PC-9 (cell line): ENCODE measurements at regions of chr4 and their contacts with region 1.

Region 1: GRCh38 chr4:99655308-99656081 is 2.1 kb downstream of the C4orf54 start:
- DNase-seq: peak; percentile 64 to 77
- H3K4me3 ChIP-seq: no peak overlapping the region
- H3K27ac ChIP-seq: peak overlapping the region; percentile 38
- H3K4me1 ChIP-seq: peaks cover 42% of the 10 kb centered on the region
- H3K27me3 ChIP-seq: no peaks in the 10 kb centered on the region
- CTCF ChIP-seq: no peak

Region 2: GRCh38 chr4:99816545-99817308 is 161.2 kb after region 1 on chr4 and contains the start of gene DAPP1:
- CTCF ChIA-PET with region 1: no interaction called
- POLR2A ChIA-PET with region 1: no interaction called
- intact Hi-C with region 1: loop called (anchors 5 kb)
- DNase-seq: peak; percentile 77 to 99
- H3K4me3 ChIP-seq: peak within 1 kb of the TSS; percentile 65
- H3K27ac ChIP-seq: peak within 1 kb of the TSS; percentile 100
- H3K4me1 ChIP-seq: peaks cover 39% of the 10 kb centered on the region
- H3K27me3 ChIP-seq: no peaks in the 10 kb centered on the region
- CTCF ChIP-seq: no peak
- total RNA-seq, gene DAPP1: 7.9 and 9.6 TPM in 2 replicates